Activated CD4-positive, alpha-beta memory T cell treated with anti-CD3 and anti-CD28 coated beads for 36 hours (primary cell): ENCODE measurements at regions of chr1 and their contacts with region 1.

Region 1: DNA sequence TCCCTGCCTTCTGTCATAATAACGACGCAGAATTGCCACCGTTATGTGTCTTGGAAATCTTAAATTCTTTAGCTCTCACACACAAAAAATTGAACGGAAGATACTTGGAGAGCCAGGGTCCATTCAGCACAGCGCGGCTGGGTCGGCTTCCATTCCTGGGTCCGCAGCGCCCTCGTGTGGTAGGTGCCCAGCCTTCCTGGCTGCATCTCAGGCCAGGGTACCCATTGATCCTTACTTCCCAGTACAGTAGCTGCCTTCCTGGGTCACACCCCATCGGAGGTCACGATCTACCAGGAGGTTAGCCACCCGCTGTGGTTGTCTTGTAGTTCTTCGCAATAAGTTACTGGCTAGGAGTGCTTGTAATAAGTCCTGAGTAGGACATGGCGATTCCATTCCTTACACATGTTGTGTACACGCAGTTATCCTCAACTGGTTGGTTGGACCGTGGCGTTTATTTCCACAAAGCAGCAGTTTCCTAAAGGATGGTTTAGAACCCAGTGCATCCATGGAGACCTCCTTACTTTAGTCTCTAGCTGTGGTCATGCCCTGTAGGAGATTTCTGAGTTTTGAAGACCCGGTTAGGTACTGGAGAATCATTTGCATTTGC is 9.9 kb upstream of the MTARC1 start:
- DNase-seq: peak; percentile 76
- H3K4me3 Mint-ChIP-seq: no peak overlapping the region
- H3K27ac Mint-ChIP-seq: no peak overlapping the region
- H3K4me1 Mint-ChIP-seq: no peaks in the 10 kb centered on the region
- H3K27me3 Mint-ChIP-seq: peaks cover 6% of the 10 kb centered on the region

Region 2: DNA sequence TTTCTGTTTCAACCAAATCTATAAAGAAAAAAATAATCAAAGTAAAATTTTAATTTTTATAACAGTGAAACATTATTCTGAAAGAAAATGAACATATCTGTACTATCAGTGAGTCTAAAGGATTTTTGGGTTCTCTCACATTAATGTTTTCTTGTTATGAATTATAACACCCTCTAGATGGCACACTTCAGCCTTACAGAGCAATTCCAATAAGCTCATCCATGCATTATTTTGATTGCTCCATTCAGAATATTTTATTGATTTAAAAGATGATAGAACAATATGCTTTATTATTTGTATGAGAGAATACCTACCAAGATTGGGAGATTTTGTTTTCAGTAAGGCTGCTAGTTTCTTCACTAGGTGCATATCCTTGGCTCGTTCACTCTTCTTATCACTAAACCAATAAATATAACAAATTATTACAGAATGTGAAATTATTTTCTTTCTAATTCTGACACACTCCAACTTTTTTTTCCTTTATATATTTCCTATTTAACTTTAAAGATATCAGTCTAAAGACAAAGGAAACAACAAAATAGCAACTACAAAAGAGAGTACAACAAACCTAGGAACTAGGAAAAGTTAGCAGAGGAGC is 587.0 kb before region 1 on chr1:
- CTCF ChIA-PET with region 1: interaction called, 9 read pairs
- POLR2A ChIA-PET with region 1: no interaction called
- intact Hi-C with region 1: loop called (anchors 10 kb)
- DNase-seq: no peak
- H3K4me3 Mint-ChIP-seq: no peak overlapping the region
- H3K27ac Mint-ChIP-seq: no peak overlapping the region
- H3K4me1 Mint-ChIP-seq: no peaks in the 10 kb centered on the region
- H3K27me3 Mint-ChIP-seq: no peaks in the 10 kb centered on the region

Region 3: GRCh38 chr1:220294846-220295301 is 481.9 kb before region 1 on chr1:
- CTCF ChIA-PET with region 1: interaction called, 4 read pairs
- POLR2A ChIA-PET with region 1: no interaction called
- intact Hi-C with region 1: loop called (anchors 5 kb)
- DNase-seq: no peak
- H3K4me3 Mint-ChIP-seq: no peak overlapping the region
- H3K27ac Mint-ChIP-seq: no peak overlapping the region
- H3K4me1 Mint-ChIP-seq: no peaks in the 10 kb centered on the region
- H3K27me3 Mint-ChIP-seq: peaks cover 8% of the 10 kb centered on the region

Region 4: GRCh38 chr1:220690140-220691025 is 86.4 kb before region 1 on chr1 and contains the start of gene C1orf115:
- CTCF ChIA-PET with region 1: no interaction called
- POLR2A ChIA-PET with region 1: no interaction called
- intact Hi-C with region 1: loop called (anchors 1 kb)
- DNase-seq: peak; percentile 85
- H3K4me3 Mint-ChIP-seq: peak within 1 kb of the TSS; percentile 77
- H3K27ac Mint-ChIP-seq: no peak within 1 kb of the TSS
- H3K4me1 Mint-ChIP-seq: peaks cover 7% of the 10 kb centered on the region
- H3K27me3 Mint-ChIP-seq: peaks cover 8% of the 10 kb centered on the region
- total RNA-seq, gene C1orf115: 0.73 to 0.76 TPM

Region 5: DNA sequence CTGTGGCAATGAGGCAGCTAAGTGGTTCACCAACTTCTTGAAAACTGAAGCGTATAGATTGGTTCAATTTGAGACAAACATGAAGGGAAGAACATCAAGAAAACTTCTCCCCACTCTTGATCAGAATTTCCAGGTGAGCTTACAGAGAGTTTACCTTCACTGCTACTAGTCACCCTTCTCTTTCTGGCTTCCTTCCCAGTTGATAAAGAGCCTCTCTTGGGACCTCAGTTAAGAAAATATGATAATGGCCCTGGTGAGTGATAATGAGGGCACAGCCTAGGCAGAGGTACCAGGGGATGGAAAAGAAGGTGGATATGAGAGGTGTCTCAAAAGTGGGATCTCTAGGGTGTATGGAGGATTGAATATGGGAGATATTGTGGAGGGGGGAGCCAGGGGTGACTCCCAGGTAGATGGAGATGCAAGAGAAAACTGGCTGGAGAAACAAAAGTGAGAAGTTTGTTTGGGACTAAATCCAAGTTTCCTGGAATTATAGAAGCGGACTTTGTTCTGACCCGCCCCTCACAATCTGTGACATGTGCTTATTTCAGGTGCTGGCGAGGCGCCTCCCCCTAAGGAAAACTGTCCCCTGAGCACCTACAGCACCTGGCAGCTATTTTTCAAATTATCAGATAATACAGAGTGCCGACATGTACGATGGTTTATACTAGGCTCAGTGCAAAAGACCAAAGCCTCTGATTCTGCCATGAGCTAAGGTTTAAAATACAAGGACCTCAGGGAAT is 15.0 kb before region 1 on chr1:
- CTCF ChIA-PET with region 1: interaction called, 10 read pairs
- POLR2A ChIA-PET with region 1: no interaction called
- intact Hi-C with region 1: no loop called
- DNase-seq: no peak
- H3K4me3 Mint-ChIP-seq: no peak overlapping the region
- H3K27ac Mint-ChIP-seq: no peak overlapping the region
- H3K4me1 Mint-ChIP-seq: no peaks in the 10 kb centered on the region
- H3K27me3 Mint-ChIP-seq: peaks cover 5% of the 10 kb centered on the region